ENCODE measurements at regions of chr2 and their contacts with region 1.

Region 1: GRCh38 chr2:39227628-39228412 is 15.9 kb downstream of the CDKL4 start:
- DNase-seq: peak; percentile 60 to 72
- ATAC-seq: peak; percentile 56 to 76
- H3K4me3 ChIP-seq: peak overlapping the region in 1 of 4 donors; percentile 35
- H3K27ac ChIP-seq: peak overlapping the region in 1 of 4 donors; percentile 69
- H3K4me1 ChIP-seq: peaks cover 13 to 17% of the 10 kb centered on the region in 2 donors
- H3K27me3 ChIP-seq: no peaks in the 10 kb centered on the region
- CTCF ChIP-seq: peak; percentile 73 to 89 (median 83)
- POLR2A ChIP-seq: no peak

Region 2: GRCh38 chr2:38947240-38948239 is 280.3 kb before region 1 on chr2:
- in situ Hi-C with region 1: no loop called
- intact Hi-C with region 1: loop called (anchors 1 kb)
- DNase-seq: peak in 1 of 2 donors; percentile 30
- ATAC-seq: peak in 1 of 2 donors; percentile 46
- H3K4me3 ChIP-seq: no peak overlapping the region
- H3K27ac ChIP-seq: no peak overlapping the region
- H3K4me1 ChIP-seq: no peaks in the 10 kb centered on the region
- H3K27me3 ChIP-seq: no peaks in the 10 kb centered on the region
- CTCF ChIP-seq: peak; percentile 12 to 58 (median 46)
- POLR2A ChIP-seq: no peak

Region 3: GRCh38 chr2:39059366-39059952 is 168.4 kb before region 1 on chr2:
- in situ Hi-C with region 1: loop called (anchors 5 to 10 kb)
- intact Hi-C with region 1: loop called (anchors 1 kb)
- DNase-seq: no peak
- ATAC-seq: no peak
- H3K4me3 ChIP-seq: no peak overlapping the region
- H3K27ac ChIP-seq: peak overlapping the region in 1 of 4 donors; percentile 34
- H3K4me1 ChIP-seq: peaks cover 0 to 7% of the 10 kb centered on the region in 2 donors
- H3K27me3 ChIP-seq: no peaks in the 10 kb centered on the region
- CTCF ChIP-seq: peak; percentile 52 to 80 (median 75)
- POLR2A ChIP-seq: no peak

Region 4: DNA sequence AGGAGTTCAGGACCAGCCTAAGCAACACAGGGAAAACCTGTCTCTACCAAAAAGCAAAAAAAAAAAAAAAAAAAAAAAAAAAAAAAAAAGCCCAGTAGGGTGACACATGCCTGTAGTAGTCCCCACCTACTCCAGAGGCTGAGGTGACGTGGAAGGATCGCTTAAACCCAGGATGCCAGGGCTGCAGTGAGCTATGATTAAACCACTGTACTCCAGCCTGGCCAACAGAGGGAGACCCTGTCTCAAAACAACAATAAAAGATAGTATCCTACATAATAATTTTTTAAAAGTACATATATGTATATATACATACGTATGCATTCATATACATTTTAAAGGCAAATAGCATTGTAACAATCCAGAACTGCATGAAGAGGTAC is 158.7 kb before region 1 on chr2:
- in situ Hi-C with region 1: loop called (anchors 5 to 10 kb)
- intact Hi-C with region 1: no loop called
- DNase-seq: no peak
- ATAC-seq: no peak
- H3K4me3 ChIP-seq: no peak overlapping the region
- H3K27ac ChIP-seq: no peak overlapping the region
- H3K4me1 ChIP-seq: peaks cover 37 to 38% of the 10 kb centered on the region in 2 donors
- H3K27me3 ChIP-seq: no peaks in the 10 kb centered on the region
- CTCF ChIP-seq: no peak
- POLR2A ChIP-seq: no peak

Measured in gastrocnemius medialis (tissue), 4 donors.